Activated naive CD4-positive, alpha-beta T cell treated with anti-CD3 and anti-CD28 coated beads for 36 hours (primary cell): ENCODE measurements at regions of chr20 and their contacts with region 1.

Region 1: GRCh38 chr20:49699200-49699992 is 14.3 kb downstream of the B4GALT5 start:
- DNase-seq: peak; percentile 62
- H3K4me3 Mint-ChIP-seq: no peak overlapping the region
- H3K27ac Mint-ChIP-seq: peak overlapping the region; percentile 70
- H3K4me1 Mint-ChIP-seq: peaks cover 60% of the 10 kb centered on the region
- H3K27me3 Mint-ChIP-seq: no peaks in the 10 kb centered on the region

Region 2: GRCh38 chr20:49676581-49677291 is 22.7 kb before region 1 on chr20:
- CTCF ChIA-PET with region 1: no interaction called
- intact Hi-C with region 1: loop called (anchors 1 kb)
- DNase-seq: peak; percentile 35
- H3K4me3 Mint-ChIP-seq: no peak overlapping the region
- H3K27ac Mint-ChIP-seq: peak overlapping the region; percentile 5
- H3K4me1 Mint-ChIP-seq: peaks cover 51% of the 10 kb centered on the region
- H3K27me3 Mint-ChIP-seq: no peaks in the 10 kb centered on the region

Region 3: GRCh38 chr20:49797344-49797615 is 97.9 kb after region 1 on chr20:
- CTCF ChIA-PET with region 1: no interaction called
- intact Hi-C with region 1: loop called (anchors 1 kb)
- DNase-seq: no peak
- H3K4me3 Mint-ChIP-seq: no peak overlapping the region
- H3K27ac Mint-ChIP-seq: no peak overlapping the region
- H3K4me1 Mint-ChIP-seq: peaks cover 16% of the 10 kb centered on the region
- H3K27me3 Mint-ChIP-seq: peaks cover 8% of the 10 kb centered on the region